Sigmoid colon (tissue), 7 donors: ENCODE measurements at regions of chr19 and their contacts with region 1.

Region 1: GRCh38 chr19:5790573-5791520 is at the start of gene DUS3L:
- DNase-seq: peak; percentile 99
- H3K4me3 ChIP-seq: peak within 1 kb of the TSS; percentile 88 to 97 (median 92)
- H3K27ac ChIP-seq: peak within 1 kb of the TSS; percentile 98 to 100 (median 99)
- H3K4me1 ChIP-seq: peaks cover 2 to 9% (median 9%) of the 10 kb centered on the region in 4 donors
- H3K27me3 ChIP-seq: no peaks in the 10 kb centered on the region
- CTCF ChIP-seq: no peak
- EP300 ChIP-seq: peak in 1 of 4 donors; percentile 48
- POLR2A ChIP-seq: peak; percentile 63 to 66
- total RNA-seq, gene DUS3L: 26.7 to 37.4 (median 31.7) TPM

Region 2: DNA sequence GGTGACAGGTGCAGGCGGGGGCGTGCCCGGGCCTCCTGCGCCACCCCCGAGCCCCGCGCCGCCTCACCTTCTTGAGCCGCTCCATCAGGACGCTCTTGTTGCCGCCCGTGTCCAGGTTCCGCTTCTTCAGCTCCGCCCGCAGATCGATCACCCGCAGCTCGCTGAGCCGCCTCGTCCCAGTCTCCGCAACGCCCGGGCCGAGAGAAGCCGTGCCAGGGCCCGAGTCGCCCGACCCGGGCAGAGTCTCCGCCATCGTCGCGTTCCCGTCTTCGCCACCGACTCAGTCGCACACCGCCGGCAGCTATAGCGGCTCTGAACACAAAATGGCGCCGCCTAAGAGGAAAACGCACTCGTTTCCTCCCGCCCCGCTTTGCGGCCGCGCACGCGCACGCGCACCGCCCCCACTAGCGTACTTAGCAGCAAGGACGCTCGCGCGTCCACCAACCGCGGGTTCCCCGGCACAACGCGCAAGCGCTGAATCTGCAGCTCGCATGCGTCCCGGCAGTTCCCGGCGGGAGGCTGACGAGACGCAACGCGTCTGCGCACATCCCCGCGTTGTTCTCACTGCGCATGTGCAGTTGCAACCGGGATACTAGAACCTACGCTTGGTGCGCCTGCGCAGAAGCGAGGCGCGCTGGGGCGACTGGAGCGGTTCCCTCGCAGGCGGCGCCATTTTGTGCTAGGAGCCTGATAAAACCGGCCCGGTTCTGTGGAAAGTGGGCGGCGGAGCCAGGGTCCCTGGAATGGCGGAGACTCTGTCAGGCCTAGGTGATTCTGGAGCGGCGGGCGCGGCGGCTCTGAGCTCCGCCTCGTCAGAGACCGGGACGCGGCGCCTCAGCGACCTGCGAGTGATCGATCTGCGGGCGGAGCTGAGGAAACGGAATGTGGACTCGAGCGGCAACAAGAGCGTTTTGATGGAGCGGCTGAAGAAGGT is 168.1 kb before region 1 on chr19 and contains the starts of genes SAFB and SAFB2:
- intact Hi-C with region 1: loop called (anchors 5 kb)
- DNase-seq: peak; percentile 100
- H3K4me3 ChIP-seq: peak within 1 kb of the TSS; percentile 78 to 95 (median 88)
- H3K27ac ChIP-seq: peak within 1 kb of the TSS; percentile 95 to 99 (median 98)
- H3K4me1 ChIP-seq: peaks cover 0 to 72% (median 67%) of the 10 kb centered on the region in 4 donors
- H3K27me3 ChIP-seq: no peaks in the 10 kb centered on the region
- CTCF ChIP-seq: no peak
- EP300 ChIP-seq: peak in 1 of 4 donors; percentile 14
- POLR2A ChIP-seq: peak; percentile 95 to 96
- total RNA-seq, gene SAFB: 48.9 to 75.9 (median 60.4) TPM
- total RNA-seq, gene SAFB2: 22.8 to 80.0 (median 38.1) TPM

Region 3: DNA sequence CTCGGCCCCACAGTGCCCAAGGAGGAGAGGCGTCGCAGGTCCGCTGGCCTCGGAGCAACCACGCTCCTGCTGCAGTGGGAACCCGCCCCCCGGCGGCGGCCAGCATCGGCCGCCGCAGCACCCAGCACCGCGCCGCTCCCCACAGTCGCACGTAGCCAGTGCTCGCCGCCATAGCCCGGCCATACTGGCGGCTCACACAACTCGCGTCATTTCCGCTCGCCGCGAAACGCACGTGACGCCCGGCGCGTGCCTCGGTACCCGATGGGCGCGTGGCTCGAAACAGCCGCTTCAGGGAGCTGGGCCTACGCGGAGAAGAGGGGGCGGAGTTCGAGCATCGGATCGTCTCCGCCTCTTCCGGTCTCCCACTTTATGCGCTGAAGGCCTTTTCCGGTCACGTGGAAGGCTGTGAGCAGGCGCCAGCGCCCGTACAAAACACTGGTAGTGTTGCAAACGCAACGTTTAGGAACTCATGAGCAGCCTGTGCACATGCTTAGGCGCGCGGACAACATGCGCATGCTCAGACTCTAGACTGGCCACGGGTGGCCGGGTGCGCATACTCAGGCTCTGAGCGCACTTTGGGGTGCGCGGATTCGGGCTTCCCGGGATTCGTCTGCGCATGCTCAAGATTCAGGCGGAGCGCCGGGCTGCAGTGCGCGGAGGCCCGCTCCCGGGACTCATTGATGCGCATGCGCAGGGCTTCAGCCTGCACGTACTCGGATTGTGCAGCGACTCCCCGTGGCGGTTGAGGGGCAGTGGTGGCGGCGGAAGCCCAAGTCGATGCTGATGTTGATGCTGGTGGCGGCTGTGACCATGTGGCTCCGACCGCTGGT is 70.7 kb before region 1 on chr19 and contains the starts of genes CATSPERD and LONP1:
- intact Hi-C with region 1: loop called (anchors 5 kb)
- DNase-seq: peak; percentile 99
- H3K4me3 ChIP-seq: peak within 1 kb of the TSS; percentile 70 to 94 (median 92)
- H3K27ac ChIP-seq: peak within 1 kb of the TSS; percentile 89 to 97 (median 97)
- H3K4me1 ChIP-seq: peaks cover 0 to 30% (median 26%) of the 10 kb centered on the region in 4 donors
- H3K27me3 ChIP-seq: no peaks in the 10 kb centered on the region
- CTCF ChIP-seq: peak; percentile 89 to 98 (median 94)
- EP300 ChIP-seq: peak in 2 of 4 donors; percentile 44 to 93
- POLR2A ChIP-seq: peak; percentile 42 to 48
- total RNA-seq, gene CATSPERD: not detected
- total RNA-seq, gene LONP1: 30.5 to 48.5 (median 36.6) TPM

Region 4: DNA sequence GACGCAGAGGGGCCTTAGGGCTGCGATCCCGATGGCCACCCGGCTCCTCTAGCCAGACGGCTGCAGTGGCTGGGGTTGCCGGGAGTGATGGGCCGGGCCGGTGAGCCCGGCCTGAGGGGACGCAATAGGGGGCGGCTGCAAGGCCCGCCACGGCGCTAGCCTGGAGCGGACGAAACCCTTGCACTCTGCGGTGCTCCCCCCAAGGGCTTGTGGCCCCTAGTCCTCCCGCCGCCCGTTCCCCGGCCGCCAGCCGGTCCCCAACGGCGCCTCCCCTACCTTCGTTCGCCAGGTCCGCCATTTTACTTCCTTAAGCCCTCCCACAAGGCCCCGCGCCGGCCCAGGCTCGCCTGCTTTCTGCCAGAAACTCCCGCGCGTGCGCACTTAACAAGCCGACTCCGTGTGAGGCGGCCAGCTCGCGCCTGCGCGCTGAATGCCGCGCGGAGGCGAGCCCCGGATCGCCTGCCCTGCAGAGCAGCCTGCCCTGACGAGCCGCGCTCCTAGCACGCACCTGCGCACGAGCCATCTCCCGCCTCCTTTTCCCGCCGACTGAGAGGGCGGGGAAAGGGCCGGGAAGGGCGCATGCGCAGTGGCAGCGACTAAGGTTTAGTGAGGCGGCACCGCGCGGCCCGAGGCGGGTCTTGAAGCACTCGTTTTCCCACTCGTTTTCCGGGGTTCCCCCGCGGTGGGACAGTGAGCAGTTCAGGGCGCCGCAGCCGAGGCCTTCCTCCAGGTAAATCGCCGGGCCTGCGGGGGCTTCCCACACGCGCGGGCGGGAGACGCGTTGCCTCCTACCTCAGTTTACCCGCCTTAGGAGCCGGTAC is 187.1 kb after region 1 on chr19 and contains the start of gene RANBP3:
- intact Hi-C with region 1: loop called (anchors 5 kb)
- DNase-seq: peak; percentile 99
- H3K4me3 ChIP-seq: peak within 1 kb of the TSS; percentile 67 to 99 (median 85)
- H3K27ac ChIP-seq: peak within 1 kb of the TSS; percentile 84 to 93 (median 87)
- H3K4me1 ChIP-seq: peaks cover 0 to 61% (median 53%) of the 10 kb centered on the region in 4 donors
- H3K27me3 ChIP-seq: no peaks in the 10 kb centered on the region
- CTCF ChIP-seq: no peak
- EP300 ChIP-seq: peak in 1 of 4 donors; percentile 33
- POLR2A ChIP-seq: peak in 1 of 2 donors; percentile 26
- total RNA-seq, gene RANBP3: 63.1 to 86.4 (median 82.7) TPM